ENCODE measurements at regions of chr9 and their contacts with region 1.

Region 1: GRCh38 chr9:18255158-18255629 is 218.8 kb upstream of the ADAMTSL1 start:
- DNase-seq: peak; percentile 83
- ATAC-seq: peak; percentile 95

Region 2: DNA sequence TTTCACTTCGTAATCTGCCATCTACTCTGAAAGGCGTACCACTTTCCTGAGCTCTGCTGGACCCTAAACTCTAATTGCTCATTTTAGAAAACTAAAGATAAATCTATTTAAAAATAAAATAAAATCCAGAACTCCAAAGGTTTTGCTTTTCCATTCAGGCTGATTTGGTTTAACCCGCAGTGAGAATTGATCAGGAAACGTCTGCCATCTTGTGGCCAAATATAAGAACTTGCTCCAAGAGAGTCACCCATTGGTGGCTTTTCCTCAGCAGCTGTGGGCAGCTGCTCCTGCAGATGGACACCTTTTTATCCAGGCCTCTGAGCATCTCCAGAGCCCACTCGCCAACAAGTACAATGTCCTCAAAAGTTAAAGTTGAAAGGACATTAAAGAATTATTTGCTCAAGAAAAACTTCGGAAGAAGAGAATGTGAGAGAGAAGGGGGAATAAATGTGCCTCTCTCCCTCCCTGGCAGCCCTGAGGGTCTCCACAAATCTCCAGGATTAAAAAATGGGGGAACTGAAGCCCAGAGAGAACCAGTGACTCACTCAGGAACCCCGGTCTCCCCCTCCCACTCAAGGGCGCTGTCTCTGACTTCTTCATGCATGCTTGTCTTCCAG is 773.7 kb after region 1 on chr9:
- intact Hi-C with region 1: loop called (anchors 5 kb)
- DNase-seq: no peak
- ATAC-seq: peak; percentile 75

Measured in Right ventricle myocardium superior (tissue), 1 donor.